Sciatic nerve (tissue), 2 donors: ENCODE measurements at regions of chr20 and their contacts with region 1.

Region 1: GRCh38 chr20:57893366-57893999 is 183.7 kb upstream of the PMEPA1 start:
- DNase-seq: peak; percentile 25
- ATAC-seq: no peak

Region 2: GRCh38 chr20:57844626-57845596 is 48.6 kb before region 1 on chr20:
- intact Hi-C with region 1: loop called (anchors 5 kb)
- DNase-seq: no peak
- ATAC-seq: no peak

Region 3: GRCh38 chr20:58038202-58038823 is 144.8 kb after region 1 on chr20:
- intact Hi-C with region 1: no loop called
- DNase-seq: no peak
- ATAC-seq: no peak